Endothelial cell of umbilical vein (primary cell): ENCODE measurements at regions of chr1 and their contacts with region 1.

Region 1: DNA sequence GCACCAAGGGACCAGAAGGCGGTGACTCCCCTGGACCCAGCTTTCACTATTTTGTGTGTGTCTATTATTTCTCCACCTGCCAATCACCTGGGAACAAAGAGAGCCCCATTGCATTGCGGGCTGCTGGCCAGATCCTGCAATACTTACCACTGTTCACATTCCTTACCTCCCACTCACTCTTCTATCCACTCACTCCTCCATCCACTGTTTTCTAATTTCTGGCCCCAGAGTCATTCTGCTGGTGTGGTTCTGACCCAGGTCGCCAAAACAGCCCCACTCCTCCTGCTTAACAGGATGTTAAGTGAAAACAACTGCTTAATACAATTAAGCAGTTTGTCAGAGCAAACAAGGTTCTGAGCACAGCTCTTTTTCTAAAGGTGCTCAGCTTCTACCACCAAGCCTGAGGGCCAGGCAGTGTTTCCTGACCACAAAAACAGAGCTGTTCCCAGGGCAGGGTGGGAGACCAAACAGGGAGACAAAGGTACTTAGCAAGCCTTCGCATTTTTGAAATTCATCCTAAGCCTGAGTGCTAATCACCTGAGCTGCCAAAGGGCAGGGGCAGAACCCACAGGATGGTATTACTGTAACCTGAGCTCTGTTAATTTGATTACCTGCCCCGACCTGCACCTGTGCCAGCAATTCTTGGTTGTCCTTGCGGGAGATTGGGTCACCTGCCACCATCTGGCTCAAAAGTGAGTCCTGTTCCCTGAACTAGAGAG is 38.5 kb upstream of the EFCAB14 start:
- DNase-seq: no peak
- H3K4me3 ChIP-seq: no peak overlapping the region
- H3K27ac ChIP-seq: no peak overlapping the region
- H3K4me1 ChIP-seq: peaks cover 18% of the 10 kb centered on the region
- H3K27me3 ChIP-seq: peaks cover 0 to 2% of the 10 kb centered on the region in 2 experiments
- CTCF ChIP-seq: no peak
- POLR2A ChIP-seq: no peak

Region 2: GRCh38 chr1:47104816-47105215 is 347.4 kb after region 1 on chr1:
- CTCF ChIA-PET with region 1: no interaction called
- POLR2A ChIA-PET with region 1: no interaction called
- dilution Hi-C with region 1: no loop called
- intact Hi-C with region 1: loop called (anchors 10 kb)
- DNase-seq: no peak
- H3K4me3 ChIP-seq: no peak overlapping the region
- H3K27ac ChIP-seq: no peak overlapping the region
- H3K4me1 ChIP-seq: peaks cover 10% of the 10 kb centered on the region
- H3K27me3 ChIP-seq: peaks cover 0 to 6% of the 10 kb centered on the region in 2 experiments
- CTCF ChIP-seq: no peak
- POLR2A ChIP-seq: no peak